Adrenal gland (tissue), 19 donors: ENCODE measurements at regions of chr19 and their contacts with region 1.

Region 1: DNA sequence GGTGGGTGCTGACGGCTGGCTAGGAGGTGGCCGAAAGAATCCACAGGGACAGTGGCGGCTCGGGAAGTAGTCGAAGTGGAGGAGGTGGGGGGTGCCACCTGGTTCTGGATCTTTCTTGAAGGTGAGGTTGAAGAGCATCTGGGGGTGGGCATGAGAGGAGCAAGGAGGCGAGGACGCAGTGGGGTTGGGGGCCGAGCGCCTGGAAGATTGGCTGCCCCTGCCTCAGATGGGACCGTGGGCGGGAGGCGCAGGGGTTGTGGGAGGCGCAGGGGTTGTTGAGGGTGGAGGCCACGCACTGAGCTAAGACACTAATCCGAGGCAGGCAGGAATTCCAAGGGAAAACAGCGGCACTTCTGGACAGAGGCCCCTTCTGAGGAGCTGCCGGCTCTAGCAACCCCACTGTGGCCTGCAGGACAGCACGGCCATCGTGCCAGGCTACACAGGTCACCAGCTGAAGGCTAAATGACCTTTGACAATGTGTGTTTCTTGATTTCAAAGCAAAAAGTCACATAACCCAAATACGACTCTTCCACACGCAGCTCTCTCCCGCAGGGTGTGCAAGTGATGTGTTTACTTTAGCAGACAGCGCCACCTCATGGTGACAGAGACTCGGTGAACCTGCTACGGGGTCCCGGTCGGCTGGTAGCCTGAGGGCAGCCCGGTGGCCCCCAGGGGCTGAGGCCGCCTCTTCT is 44.1 kb upstream of the RANBP3 start:
- DNase-seq: peak; percentile 82 to 93 (median 89)
- H3K4me3 ChIP-seq: no peak overlapping the region
- H3K27ac ChIP-seq: no peak overlapping the region
- H3K4me1 ChIP-seq: no peaks in the 10 kb centered on the region
- H3K27me3 ChIP-seq: no peaks in the 10 kb centered on the region
- CTCF ChIP-seq: peak; percentile 70 to 95 (median 88)
- POLR2A ChIP-seq: no peak

Region 2: DNA sequence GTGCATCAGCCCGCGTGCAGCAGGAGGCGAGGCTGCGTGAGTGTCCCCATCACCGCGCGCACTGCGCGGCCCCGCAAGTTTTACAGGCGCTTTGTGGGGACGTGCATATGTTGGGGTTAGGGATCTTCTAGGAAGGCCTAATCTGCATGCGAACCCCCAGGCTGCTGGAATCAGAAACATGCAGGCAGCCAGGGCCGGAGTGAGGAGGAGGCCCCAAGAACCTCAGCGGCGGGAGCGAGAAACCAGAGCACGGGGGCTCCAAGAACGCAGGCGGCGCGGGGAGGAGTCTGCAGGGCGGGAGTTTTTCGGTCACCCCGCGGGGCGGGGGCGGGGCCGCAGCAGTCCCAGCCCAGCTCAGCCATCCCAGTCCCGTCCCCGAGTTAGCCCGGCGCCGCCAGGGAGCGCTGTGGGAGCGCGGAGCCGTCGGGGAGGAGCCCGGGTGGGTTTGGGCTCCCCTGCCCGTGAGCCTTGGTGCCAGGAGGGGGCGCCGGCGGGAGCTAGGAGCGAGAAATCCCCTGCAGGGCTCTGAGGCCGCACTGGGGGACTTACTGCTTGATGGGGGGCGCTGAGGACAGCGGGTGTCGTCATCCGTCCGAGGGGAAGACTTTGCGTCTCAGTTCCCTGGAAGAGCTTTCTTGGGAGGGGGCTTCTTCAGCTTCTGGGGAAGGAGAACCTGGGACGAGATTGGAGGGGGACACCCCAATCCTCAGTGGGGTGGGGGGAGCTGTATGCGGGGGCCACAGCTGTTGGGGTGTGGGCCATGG is 218.1 kb before region 1 on chr19:
- intact Hi-C with region 1: loop called (anchors 5 to 10 kb)
- DNase-seq: peak; percentile 91 to 93 (median 92)
- H3K4me3 ChIP-seq: peak overlapping the region in 1 of 4 donors; percentile 34
- H3K27ac ChIP-seq: peak overlapping the region in 3 of 5 donors; percentile 18 to 27 (median 19)
- H3K4me1 ChIP-seq: peaks cover 33 to 40% of the 10 kb centered on the region in 2 donors
- H3K27me3 ChIP-seq: no peaks in the 10 kb centered on the region
- CTCF ChIP-seq: peak; percentile 85 to 98 (median 90)
- POLR2A ChIP-seq: no peak

Region 3: DNA sequence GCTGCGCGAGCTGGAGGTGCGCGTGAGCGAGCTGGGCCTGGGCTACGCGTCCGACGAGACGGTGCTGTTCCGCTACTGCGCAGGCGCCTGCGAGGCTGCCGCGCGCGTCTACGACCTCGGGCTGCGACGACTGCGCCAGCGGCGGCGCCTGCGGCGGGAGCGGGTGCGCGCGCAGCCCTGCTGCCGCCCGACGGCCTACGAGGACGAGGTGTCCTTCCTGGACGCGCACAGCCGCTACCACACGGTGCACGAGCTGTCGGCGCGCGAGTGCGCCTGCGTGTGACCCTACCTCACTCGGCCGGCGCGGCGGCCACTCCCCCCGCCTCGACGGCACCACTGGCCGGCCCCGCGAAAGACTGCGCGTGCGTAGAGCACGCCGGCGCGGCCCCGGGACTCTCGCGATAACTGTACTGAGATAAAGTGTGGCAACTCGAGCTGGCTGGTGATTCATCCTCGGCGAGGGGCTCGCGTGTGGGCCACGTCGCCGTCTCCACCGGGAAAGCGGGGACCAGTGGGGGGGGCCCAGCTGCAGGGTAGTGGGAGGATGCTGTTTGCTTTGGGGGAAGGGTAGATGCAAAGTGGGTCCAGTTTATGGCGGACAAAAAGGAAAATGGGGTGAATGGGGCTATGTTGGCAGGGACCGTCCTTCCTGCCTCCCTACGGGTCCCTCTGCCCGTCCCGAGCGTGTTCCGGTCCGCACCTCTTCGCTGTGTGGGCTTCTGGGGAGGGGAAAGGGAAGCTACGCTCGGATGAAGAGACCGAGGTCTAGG is 193.9 kb before region 1 on chr19:
- intact Hi-C with region 1: no loop called
- DNase-seq: peak; percentile 93 to 96 (median 96)
- H3K4me3 ChIP-seq: peak overlapping the region in 3 of 4 donors; percentile 5 to 56 (median 18)
- H3K27ac ChIP-seq: peak overlapping the region; percentile 35 to 90 (median 56)
- H3K4me1 ChIP-seq: peaks cover 14 to 18% of the 10 kb centered on the region in 2 donors
- H3K27me3 ChIP-seq: no peaks in the 10 kb centered on the region
- CTCF ChIP-seq: peak in 1 of 6 experiments; percentile 8
- POLR2A ChIP-seq: peak; percentile 90 to 94

Region 4: GRCh38 chr19:5904352-5905113 is 117.5 kb before region 1 on chr19 and contains the start of gene VMAC:
- intact Hi-C with region 1: no loop called
- DNase-seq: peak; percentile 100
- H3K4me3 ChIP-seq: peak within 1 kb of the TSS; percentile 1 to 100 (median 97)
- H3K27ac ChIP-seq: peak within 1 kb of the TSS; percentile 76 to 98 (median 92)
- H3K4me1 ChIP-seq: peaks cover 16 to 38% of the 10 kb centered on the region in 2 donors
- H3K27me3 ChIP-seq: no peaks in the 10 kb centered on the region
- CTCF ChIP-seq: no peak
- POLR2A ChIP-seq: peak; percentile 65 to 80
- total RNA-seq, gene VMAC: 5.0 to 14.4 (median 8.4) TPM

Region 5: DNA sequence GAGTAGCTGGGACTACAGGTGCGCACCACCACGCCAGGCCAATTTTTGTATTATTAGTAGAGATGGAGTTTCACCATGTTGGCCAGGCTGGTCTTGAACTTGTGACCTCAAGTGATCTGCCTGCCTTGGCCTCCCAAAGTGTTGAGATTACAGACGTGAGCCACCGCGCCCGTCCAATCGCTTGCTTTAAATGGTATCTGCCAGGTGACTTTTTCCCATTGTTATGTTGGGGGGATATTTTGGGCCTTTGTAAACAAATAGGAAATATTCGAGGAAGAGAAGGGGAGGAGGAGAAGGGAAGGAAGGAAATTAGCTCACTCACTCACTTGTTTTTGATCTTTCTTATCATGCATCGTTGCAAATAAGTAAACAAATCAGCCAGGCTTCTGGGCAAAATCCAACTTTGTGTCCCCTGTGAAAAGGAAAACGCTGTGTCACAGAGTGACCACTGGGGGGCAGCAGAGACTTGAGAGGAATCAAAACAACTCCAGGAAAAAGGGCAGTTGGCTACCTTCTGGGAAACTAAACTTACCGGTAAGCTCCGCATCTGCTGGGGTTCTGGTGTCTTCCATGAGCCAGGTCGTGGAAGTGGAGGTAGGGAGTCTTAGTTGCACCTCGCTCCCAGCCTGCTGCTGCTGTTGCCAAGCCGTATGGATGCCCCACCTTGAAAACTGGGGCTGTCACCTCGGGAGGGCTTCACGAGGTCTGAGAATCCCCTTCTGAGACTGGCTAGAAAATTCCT is 34.8 kb before region 1 on chr19:
- intact Hi-C with region 1: loop called (anchors 2 to 5 kb)
- DNase-seq: peak; percentile 77 to 90 (median 81)
- H3K4me3 ChIP-seq: peak overlapping the region in 1 of 4 donors; percentile 53
- H3K27ac ChIP-seq: no peak overlapping the region
- H3K4me1 ChIP-seq: peaks cover 0 to 10% of the 10 kb centered on the region in 2 donors
- H3K27me3 ChIP-seq: no peaks in the 10 kb centered on the region
- CTCF ChIP-seq: peak; percentile 87 to 95 (median 94)
- POLR2A ChIP-seq: no peak

Region 6: GRCh38 chr19:6038634-6039405 is 16.8 kb after region 1 on chr19:
- intact Hi-C with region 1: no loop called
- DNase-seq: peak in 2 of 7 donors; percentile 8 to 10
- H3K4me3 ChIP-seq: no peak overlapping the region
- H3K27ac ChIP-seq: no peak overlapping the region
- H3K4me1 ChIP-seq: no peaks in the 10 kb centered on the region
- H3K27me3 ChIP-seq: no peaks in the 10 kb centered on the region
- CTCF ChIP-seq: no peak
- POLR2A ChIP-seq: no peak

Region 7: DNA sequence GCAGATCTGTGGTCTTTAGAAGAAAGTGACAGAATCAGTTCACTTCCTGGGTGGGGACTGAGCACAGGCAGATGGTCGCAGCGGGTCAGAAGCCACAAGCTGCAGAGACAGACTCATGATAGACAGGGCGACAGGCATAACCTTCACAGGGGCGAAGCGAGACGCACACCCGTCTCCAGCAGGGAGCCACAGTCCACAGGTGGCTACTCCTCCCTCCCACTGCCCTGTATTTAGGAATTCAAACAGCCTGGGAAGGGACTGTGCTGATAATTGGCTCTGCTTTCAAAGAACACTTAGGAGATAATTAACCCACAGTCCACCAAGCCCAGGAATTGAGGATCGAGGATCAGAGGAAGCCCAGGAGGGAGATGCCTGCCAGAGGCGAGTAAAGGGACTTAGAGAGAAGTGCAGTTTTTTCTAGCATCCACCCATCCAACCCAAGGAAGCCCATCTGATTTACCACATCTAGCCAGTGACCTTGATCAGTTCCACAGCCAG is 65.1 kb after region 1 on chr19:
- intact Hi-C with region 1: no loop called
- DNase-seq: no peak
- H3K4me3 ChIP-seq: no peak overlapping the region
- H3K27ac ChIP-seq: peak overlapping the region in 2 of 5 donors; percentile 72 to 79
- H3K4me1 ChIP-seq: peaks cover 13 to 32% of the 10 kb centered on the region in 2 donors
- H3K27me3 ChIP-seq: no peaks in the 10 kb centered on the region
- CTCF ChIP-seq: no peak
- POLR2A ChIP-seq: no peak